Activated naive CD4-positive, alpha-beta T cell treated with anti-CD3 and anti-CD28 coated beads for 36 hours (primary cell): ENCODE measurements at regions of chr11 and their contacts with region 1.

Region 1: GRCh38 chr11:117946842-117947526 is 17.8 kb upstream of the TMPRSS13 start:
- DNase-seq: peak; percentile 91
- H3K4me3 Mint-ChIP-seq: no peak overlapping the region
- H3K27ac Mint-ChIP-seq: no peak overlapping the region
- H3K4me1 Mint-ChIP-seq: peaks cover 68% of the 10 kb centered on the region
- H3K27me3 Mint-ChIP-seq: no peaks in the 10 kb centered on the region

Region 2: GRCh38 chr11:116715383-116715782 is 1231.6 kb before region 1 on chr11:
- CTCF ChIA-PET with region 1: no interaction called
- intact Hi-C with region 1: no loop called
- DNase-seq: no peak
- H3K4me3 Mint-ChIP-seq: no peak overlapping the region
- H3K27ac Mint-ChIP-seq: no peak overlapping the region
- H3K4me1 Mint-ChIP-seq: no peaks in the 10 kb centered on the region
- H3K27me3 Mint-ChIP-seq: no peaks in the 10 kb centered on the region

Region 3: GRCh38 chr11:117817368-117818040 is 129.5 kb before region 1 on chr11:
- CTCF ChIA-PET with region 1: interaction called, 69 read pairs
- intact Hi-C with region 1: no loop called
- DNase-seq: peak; percentile 98
- H3K4me3 Mint-ChIP-seq: peak overlapping the region; percentile 56
- H3K27ac Mint-ChIP-seq: peak overlapping the region; percentile 95
- H3K4me1 Mint-ChIP-seq: peaks cover 65% of the 10 kb centered on the region
- H3K27me3 Mint-ChIP-seq: no peaks in the 10 kb centered on the region

Region 4: GRCh38 chr11:117851106-117851505 is 95.9 kb before region 1 on chr11:
- CTCF ChIA-PET with region 1: interaction called, 147 read pairs
- intact Hi-C with region 1: no loop called
- DNase-seq: no peak
- H3K4me3 Mint-ChIP-seq: no peak overlapping the region
- H3K27ac Mint-ChIP-seq: no peak overlapping the region
- H3K4me1 Mint-ChIP-seq: peaks cover 1% of the 10 kb centered on the region
- H3K27me3 Mint-ChIP-seq: peaks cover 6% of the 10 kb centered on the region

Region 5: GRCh38 chr11:117932067-117932370 is 15.0 kb before region 1 on chr11:
- CTCF ChIA-PET with region 1: interaction called, 53 read pairs
- intact Hi-C with region 1: loop called (anchors 1 kb)
- DNase-seq: peak; percentile 86
- H3K4me3 Mint-ChIP-seq: no peak overlapping the region
- H3K27ac Mint-ChIP-seq: peak overlapping the region; percentile 20
- H3K4me1 Mint-ChIP-seq: peaks cover 49% of the 10 kb centered on the region
- H3K27me3 Mint-ChIP-seq: no peaks in the 10 kb centered on the region

Region 6: GRCh38 chr11:117979481-117980211 is 32.7 kb after region 1 on chr11:
- CTCF ChIA-PET with region 1: interaction called, 28 read pairs
- intact Hi-C with region 1: no loop called
- DNase-seq: peak; percentile 53
- H3K4me3 Mint-ChIP-seq: no peak overlapping the region
- H3K27ac Mint-ChIP-seq: peak overlapping the region; percentile 16
- H3K4me1 Mint-ChIP-seq: peaks cover 54% of the 10 kb centered on the region
- H3K27me3 Mint-ChIP-seq: no peaks in the 10 kb centered on the region

Region 7: GRCh38 chr11:118046051-118046963 is 99.3 kb after region 1 on chr11:
- CTCF ChIA-PET with region 1: interaction called, 230 read pairs
- intact Hi-C with region 1: loop called (anchors 1 kb)
- DNase-seq: peak; percentile 52
- H3K4me3 Mint-ChIP-seq: no peak overlapping the region
- H3K27ac Mint-ChIP-seq: peak overlapping the region; percentile 63
- H3K4me1 Mint-ChIP-seq: peaks cover 78% of the 10 kb centered on the region
- H3K27me3 Mint-ChIP-seq: no peaks in the 10 kb centered on the region

Region 8: DNA sequence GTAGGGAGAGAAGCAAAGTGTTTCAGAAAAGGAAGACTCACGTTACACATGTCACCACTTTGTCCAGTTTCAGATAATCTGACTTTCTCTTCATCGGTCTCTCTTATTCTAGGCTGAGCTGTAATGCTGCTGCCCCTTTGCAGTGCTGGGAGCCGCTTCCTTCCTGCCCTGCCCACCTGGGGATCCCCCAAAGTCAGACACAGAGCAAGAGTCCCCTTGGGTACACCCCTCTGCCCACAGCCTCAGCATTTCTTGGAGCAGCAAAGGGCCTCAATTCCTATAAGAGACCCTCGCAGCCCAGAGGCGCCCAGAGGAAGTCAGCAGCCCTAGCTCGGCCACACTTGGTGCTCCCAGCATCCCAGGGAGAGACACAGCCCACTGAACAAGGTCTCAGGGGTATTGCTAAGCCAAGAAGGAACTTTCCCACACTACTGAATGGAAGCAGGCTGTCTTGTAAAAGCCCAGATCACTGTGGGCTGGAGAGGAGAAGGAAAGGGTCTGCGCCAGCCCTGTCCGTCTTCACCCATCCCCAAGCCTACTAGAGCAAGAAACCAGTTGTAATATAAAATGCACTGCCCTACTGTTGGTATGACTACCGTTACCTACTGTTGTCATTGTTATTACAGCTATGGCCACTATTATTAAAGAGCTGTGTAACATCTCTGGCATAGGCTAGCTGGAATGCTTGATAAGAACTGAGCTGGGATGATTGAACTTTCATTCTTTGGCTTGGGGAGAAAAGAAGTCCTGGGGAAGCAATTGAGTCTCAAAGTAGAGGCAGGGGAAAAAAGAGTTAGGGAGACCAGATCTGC is 171.0 kb after region 1 on chr11:
- CTCF ChIA-PET with region 1: no interaction called
- intact Hi-C with region 1: no loop called
- DNase-seq: no peak
- H3K4me3 Mint-ChIP-seq: no peak overlapping the region
- H3K27ac Mint-ChIP-seq: no peak overlapping the region
- H3K4me1 Mint-ChIP-seq: no peaks in the 10 kb centered on the region
- H3K27me3 Mint-ChIP-seq: peaks cover 6% of the 10 kb centered on the region

Region 9: DNA sequence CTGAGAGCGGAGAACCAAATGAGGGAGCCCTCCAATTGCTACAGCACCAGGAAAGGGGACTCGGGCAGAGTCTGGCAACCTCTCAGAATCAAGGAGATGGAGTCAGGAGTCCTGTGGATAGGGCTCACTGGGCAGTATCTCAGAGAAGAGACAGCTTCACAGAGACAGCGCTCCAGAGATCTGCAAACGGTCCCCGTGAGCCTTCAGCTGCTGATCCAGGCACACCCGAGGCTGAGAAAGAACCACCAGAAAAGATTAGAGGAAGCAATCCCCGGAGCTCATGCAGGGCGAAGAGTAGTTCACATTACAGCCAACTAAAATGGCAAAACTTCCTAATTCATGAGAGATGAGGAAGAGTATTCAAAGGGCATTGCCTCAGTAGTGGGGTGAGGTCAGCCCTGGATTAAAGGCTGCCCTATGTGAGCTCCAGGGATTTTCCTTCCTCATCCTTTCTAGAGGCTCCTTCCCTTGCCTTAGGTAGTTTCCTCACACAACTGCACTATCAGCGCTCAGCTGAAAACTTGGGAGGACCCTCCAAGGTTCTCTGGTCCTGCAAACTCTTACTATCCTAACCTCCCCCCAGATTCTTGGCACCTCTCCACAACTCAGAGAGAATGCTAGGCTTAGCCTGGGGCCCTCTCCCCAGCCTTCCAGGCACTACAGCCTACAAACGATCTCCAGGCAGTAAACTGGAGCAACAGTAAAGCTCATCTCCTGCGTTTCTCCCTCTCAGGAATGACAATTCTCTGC is 181.9 kb after region 1 on chr11:
- CTCF ChIA-PET with region 1: no interaction called
- intact Hi-C with region 1: no loop called
- DNase-seq: no peak
- H3K4me3 Mint-ChIP-seq: no peak overlapping the region
- H3K27ac Mint-ChIP-seq: no peak overlapping the region
- H3K4me1 Mint-ChIP-seq: no peaks in the 10 kb centered on the region
- H3K27me3 Mint-ChIP-seq: peaks cover 2% of the 10 kb centered on the region